ENCODE measurements at regions of chrX and their contacts with region 1.

Region 1: GRCh38 chrX:106874075-106874474 is 29.1 kb downstream of the RIPPLY1 start:
- H3K4me3 ChIP-seq: no peak overlapping the region
- H3K27ac ChIP-seq: no peak overlapping the region
- H3K4me1 ChIP-seq: no peaks in the 10 kb centered on the region
- CTCF ChIP-seq: no peak

Region 2: GRCh38 chrX:106862972-106863688 is 10.9 kb before region 1 on chrX:
- CTCF ChIA-PET with region 1: interaction called, 17 read pairs
- POLR2A ChIA-PET with region 1: no interaction called
- H3K4me3 ChIP-seq: no peak overlapping the region
- H3K27ac ChIP-seq: no peak overlapping the region
- H3K4me1 ChIP-seq: no peaks in the 10 kb centered on the region
- CTCF ChIP-seq: peak; percentile 27; the same call in 1 of the 2 replicates